Heart right ventricle (tissue), 16 donors: ENCODE measurements at regions of chr6 and their contacts with region 1.

Region 1: DNA sequence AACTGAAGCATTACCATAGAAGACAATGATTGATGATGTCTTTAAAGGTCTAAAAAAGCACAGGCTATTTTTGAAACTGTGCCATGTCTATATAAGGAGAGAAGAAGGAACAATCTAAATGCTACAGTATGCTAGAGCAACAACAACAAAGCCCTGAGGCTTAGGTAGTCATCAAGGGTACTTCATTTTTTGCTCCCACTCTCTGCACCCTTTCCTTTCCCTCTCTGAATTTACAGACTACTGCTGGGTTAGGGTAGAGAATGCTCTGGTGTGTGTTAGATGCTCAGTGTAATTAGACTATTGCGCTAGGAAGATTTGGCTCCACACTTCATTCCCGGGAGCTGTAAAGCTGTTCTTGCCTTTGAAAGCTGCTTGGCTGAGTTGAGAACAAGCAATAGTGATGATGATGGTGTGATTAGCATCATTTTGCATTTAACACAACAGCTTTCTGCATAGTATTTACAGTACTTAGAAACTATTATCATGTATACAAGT is 1262.5 kb upstream of the CITED2 start:
- DNase-seq: no peak
- ATAC-seq: peak in 1 of 8 donors; percentile 12
- H3K4me3 ChIP-seq: no peak overlapping the region
- H3K27ac ChIP-seq: no peak overlapping the region
- H3K4me1 ChIP-seq: no peaks in the 10 kb centered on the region
- H3K27me3 ChIP-seq: no peaks in the 10 kb centered on the region
- CTCF ChIP-seq: no peak

Region 2: GRCh38 chr6:140604786-140605185 is 32.2 kb before region 1 on chr6:
- intact Hi-C with region 1: loop called in 1 of 10 experiments (anchors 1 kb)
- DNase-seq: no peak
- ATAC-seq: no peak
- H3K4me3 ChIP-seq: no peak overlapping the region
- H3K27ac ChIP-seq: no peak overlapping the region
- H3K4me1 ChIP-seq: peaks cover 0 to under 1% (median 0%) of the 10 kb centered on the region in 9 donors
- H3K27me3 ChIP-seq: no peaks in the 10 kb centered on the region
- CTCF ChIP-seq: no peak